Activated CD4-positive, alpha-beta T cell treated with anti-CD3 and anti-CD28 coated beads for 36 hours (primary cell): ENCODE measurements at regions of chr12 and their contacts with region 1.

Region 1: GRCh38 chr12:116559162-116559935 is at the start of gene MAP1LC3B2:
- DNase-seq: peak; percentile 87
- ATAC-seq: peak; percentile 89
- H3K4me3 Mint-ChIP-seq: peak within 1 kb of the TSS; percentile 66
- H3K27ac Mint-ChIP-seq: peak within 1 kb of the TSS; percentile 96
- H3K4me1 Mint-ChIP-seq: peaks cover 33% of the 10 kb centered on the region
- H3K27me3 Mint-ChIP-seq: no peaks in the 10 kb centered on the region
- total RNA-seq, gene MAP1LC3B2: 1.8 TPM in 1 of 2 experiments, not detected in the other

Region 2: DNA sequence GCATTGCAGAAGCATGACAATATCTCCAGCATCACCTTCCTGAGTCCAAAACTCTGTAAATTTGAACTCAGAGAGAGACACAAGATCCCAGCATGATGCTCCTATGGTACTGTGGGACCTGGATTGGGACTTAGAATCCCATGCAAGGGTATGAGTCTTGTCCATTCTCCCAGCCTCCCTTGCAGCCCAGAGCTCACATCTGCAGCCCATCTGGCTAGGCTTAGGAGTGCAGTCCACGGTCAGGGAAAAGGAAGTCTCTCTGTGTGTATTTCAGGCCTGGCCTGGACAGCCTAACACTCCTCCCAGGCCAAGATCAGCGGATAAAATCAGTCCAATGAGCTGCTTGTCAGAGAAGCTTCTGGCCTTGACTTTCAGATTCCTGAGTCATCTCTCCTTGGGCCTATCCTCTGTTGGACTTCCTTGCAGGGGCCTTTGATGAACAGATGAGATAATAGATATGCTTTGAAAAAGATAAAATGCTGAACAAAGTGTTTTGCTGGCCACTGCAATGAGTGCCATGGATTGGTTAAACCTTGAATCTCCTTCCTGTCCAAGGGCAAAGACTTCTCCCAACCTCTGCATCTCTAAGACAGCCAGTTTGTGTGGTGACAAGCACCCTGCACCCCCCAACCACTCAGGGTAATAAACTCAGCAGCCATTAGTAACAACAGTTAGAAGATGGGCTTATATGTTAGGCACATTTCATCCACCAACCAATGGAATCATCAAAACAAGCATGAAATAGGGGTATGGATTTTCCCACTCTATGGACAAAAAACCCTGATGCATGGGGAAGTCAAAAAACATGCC is 1462.6 kb before region 1 on chr12:
- CTCF ChIA-PET with region 1: no interaction called
- POLR2A ChIA-PET with region 1: no interaction called
- intact Hi-C with region 1: no loop called
- DNase-seq: no peak
- ATAC-seq: no peak
- H3K4me3 Mint-ChIP-seq: no peak overlapping the region
- H3K27ac Mint-ChIP-seq: no peak overlapping the region
- H3K4me1 Mint-ChIP-seq: no peaks in the 10 kb centered on the region
- H3K27me3 Mint-ChIP-seq: no peaks in the 10 kb centered on the region

Region 3: GRCh38 chr12:116533343-116534251 is 25.8 kb before region 1 on chr12:
- CTCF ChIA-PET with region 1: interaction called, 4 read pairs
- POLR2A ChIA-PET with region 1: interaction called, 3 read pairs
- intact Hi-C with region 1: loop called (anchors 1 to 2 kb)
- DNase-seq: peak; percentile 89
- ATAC-seq: peak; percentile 91
- H3K4me3 Mint-ChIP-seq: peak overlapping the region; percentile 73
- H3K27ac Mint-ChIP-seq: no peak overlapping the region
- H3K4me1 Mint-ChIP-seq: peaks cover 37% of the 10 kb centered on the region
- H3K27me3 Mint-ChIP-seq: no peaks in the 10 kb centered on the region

Region 4: DNA sequence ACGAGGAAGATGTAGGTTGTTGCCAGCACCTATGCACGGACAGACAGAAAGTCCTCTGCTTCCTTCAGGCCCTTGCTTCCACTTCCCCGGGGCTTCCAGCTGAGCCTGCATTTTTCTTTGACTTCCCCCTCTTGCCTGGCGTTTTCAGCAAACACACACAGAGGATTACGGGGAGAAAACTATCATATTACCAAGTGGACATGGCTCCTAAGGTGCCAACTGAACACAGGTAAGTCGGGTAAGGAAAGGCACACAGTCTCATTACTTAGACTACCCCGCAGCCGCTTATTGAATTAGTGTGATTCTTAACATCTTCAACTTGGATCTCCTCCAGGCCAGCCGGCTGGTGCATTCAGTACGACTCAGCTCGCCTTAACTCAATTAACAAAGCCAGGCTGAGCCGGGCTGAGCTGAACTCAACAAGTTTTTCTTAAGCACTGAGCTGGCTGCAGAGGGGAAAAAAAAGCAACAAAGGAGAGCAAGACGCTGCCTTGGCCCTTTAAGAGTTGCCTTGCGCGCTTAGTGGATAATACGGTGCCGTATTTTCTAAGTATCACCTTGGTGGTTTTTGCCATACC is 19.4 kb before region 1 on chr12:
- CTCF ChIA-PET with region 1: interaction called, 4 read pairs
- POLR2A ChIA-PET with region 1: interaction called, 3 read pairs
- intact Hi-C with region 1: loop called in 1 of 2 experiments (anchors 2 kb)
- DNase-seq: no peak
- ATAC-seq: no peak
- H3K4me3 Mint-ChIP-seq: no peak overlapping the region
- H3K27ac Mint-ChIP-seq: no peak overlapping the region
- H3K4me1 Mint-ChIP-seq: peaks cover 23% of the 10 kb centered on the region
- H3K27me3 Mint-ChIP-seq: no peaks in the 10 kb centered on the region

Region 5: GRCh38 chr12:116594325-116595038 is 35.1 kb after region 1 on chr12:
- CTCF ChIA-PET with region 1: interaction called, 5 read pairs
- POLR2A ChIA-PET with region 1: no interaction called
- intact Hi-C with region 1: loop called in 1 of 2 experiments (anchors 2 kb)
- DNase-seq: peak; percentile 61
- ATAC-seq: peak; percentile 94
- H3K4me3 Mint-ChIP-seq: no peak overlapping the region
- H3K27ac Mint-ChIP-seq: peak overlapping the region; percentile 86
- H3K4me1 Mint-ChIP-seq: peaks cover 32% of the 10 kb centered on the region
- H3K27me3 Mint-ChIP-seq: no peaks in the 10 kb centered on the region

Region 6: GRCh38 chr12:116969615-116970580 is 410.5 kb after region 1 on chr12:
- CTCF ChIA-PET with region 1: no interaction called
- POLR2A ChIA-PET with region 1: no interaction called
- intact Hi-C with region 1: no loop called
- DNase-seq: no peak
- ATAC-seq: no peak
- H3K4me3 Mint-ChIP-seq: no peak overlapping the region
- H3K27ac Mint-ChIP-seq: no peak overlapping the region
- H3K4me1 Mint-ChIP-seq: no peaks in the 10 kb centered on the region
- H3K27me3 Mint-ChIP-seq: no peaks in the 10 kb centered on the region